Body of pancreas (tissue), 4 donors: ENCODE measurements at regions of chr3 and their contacts with region 1.

Region 1: GRCh38 chr3:124084022-124084881 is 92.3 kb upstream of the ROPN1 start:
- DNase-seq: no peak
- ATAC-seq: no peak
- H3K4me3 ChIP-seq: no peak overlapping the region
- H3K27ac ChIP-seq: no peak overlapping the region
- H3K4me1 ChIP-seq: no peaks in the 10 kb centered on the region
- H3K27me3 ChIP-seq: no peaks in the 10 kb centered on the region
- CTCF ChIP-seq: no peak
- POLR2A ChIP-seq: no peak

Region 2: DNA sequence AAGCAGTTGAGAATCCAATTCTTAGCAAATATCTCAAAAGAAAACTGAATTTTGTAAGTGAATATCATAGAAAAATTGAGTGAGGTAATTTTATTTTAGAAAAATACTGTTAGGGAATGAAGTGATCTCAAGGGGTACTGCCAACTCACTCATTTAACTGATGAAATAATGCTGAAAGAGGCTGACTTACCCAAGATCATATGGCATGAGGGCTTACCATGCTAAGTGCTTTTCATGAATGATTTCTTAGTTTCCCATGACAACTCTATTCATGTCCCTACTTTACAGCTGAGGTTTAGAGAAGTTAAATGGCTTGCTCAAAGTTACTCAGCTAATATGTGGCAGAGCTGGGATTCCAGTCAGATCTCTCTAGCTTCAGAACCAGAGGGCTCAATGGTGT is 153.8 kb before region 1 on chr3:
- intact Hi-C with region 1: no loop called
- DNase-seq: no peak
- ATAC-seq: no peak
- H3K4me3 ChIP-seq: no peak overlapping the region
- H3K27ac ChIP-seq: no peak overlapping the region
- H3K4me1 ChIP-seq: no peaks in the 10 kb centered on the region
- H3K27me3 ChIP-seq: no peaks in the 10 kb centered on the region
- CTCF ChIP-seq: no peak
- POLR2A ChIP-seq: no peak

Region 3: DNA sequence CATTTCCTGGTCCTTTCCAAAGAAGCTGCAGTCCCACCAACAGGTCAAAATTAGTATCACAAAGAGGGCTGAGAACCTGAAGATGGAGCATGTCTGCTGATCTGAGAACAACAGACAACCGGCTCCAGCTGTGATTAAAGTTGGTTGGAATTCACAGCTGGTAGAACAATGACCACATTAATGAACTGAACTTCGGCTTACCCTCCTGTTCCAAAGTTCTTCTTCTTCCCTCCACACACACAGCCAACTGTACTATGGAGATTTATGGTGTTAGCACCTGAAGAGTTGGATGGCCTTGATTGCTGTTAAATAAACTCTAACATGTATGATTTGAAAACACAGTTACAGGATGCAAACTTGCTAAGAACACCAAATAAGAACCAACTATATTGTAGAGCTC is 65.0 kb before region 1 on chr3:
- intact Hi-C with region 1: loop called (anchors 5 kb)
- DNase-seq: no peak
- ATAC-seq: no peak
- H3K4me3 ChIP-seq: no peak overlapping the region
- H3K27ac ChIP-seq: no peak overlapping the region
- H3K4me1 ChIP-seq: peaks cover 8% of the 10 kb centered on the region
- H3K27me3 ChIP-seq: peaks cover 0 to 7% of the 10 kb centered on the region in 2 donors
- CTCF ChIP-seq: no peak
- POLR2A ChIP-seq: no peak

Region 4: DNA sequence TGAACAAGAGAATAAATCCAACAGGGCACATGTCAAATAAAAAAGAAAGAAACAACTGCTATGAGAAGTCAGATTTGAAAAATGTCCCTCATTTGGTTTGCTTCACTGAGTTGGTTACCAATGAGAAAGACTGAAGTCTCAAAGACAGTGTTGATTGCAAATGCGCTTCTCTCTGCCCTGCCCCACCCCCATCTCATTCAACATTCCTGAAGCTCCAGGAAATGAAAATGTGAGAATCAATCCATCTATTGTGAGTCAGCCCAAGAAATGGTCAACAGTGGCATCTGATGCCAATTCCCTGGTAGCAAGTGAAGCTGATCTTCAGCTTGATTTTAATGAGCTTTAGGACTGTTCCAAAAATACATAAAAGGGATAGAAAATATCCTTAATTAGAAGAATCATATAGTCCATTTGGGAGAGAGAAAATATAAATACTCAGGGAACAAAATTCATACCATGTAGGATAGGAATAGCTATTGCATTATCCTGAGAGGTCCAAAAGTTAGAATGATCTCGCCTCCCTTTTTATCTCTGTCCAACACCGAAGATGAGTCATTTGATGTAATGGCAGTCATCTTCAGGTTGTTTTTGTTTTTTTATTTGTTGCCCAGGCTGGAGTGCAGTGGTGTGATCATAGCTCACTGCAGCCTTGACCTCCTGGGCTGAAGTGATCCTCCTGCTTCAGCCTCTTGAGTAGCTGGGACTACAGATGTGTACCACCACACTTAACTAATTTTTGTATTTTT is 445.7 kb after region 1 on chr3:
- intact Hi-C with region 1: no loop called
- DNase-seq: peak in 3 of 4 donors; percentile 17 to 25 (median 20)
- ATAC-seq: peak; percentile 71
- H3K4me3 ChIP-seq: no peak overlapping the region
- H3K27ac ChIP-seq: no peak overlapping the region
- H3K4me1 ChIP-seq: no peaks in the 10 kb centered on the region
- H3K27me3 ChIP-seq: no peaks in the 10 kb centered on the region
- CTCF ChIP-seq: no peak
- POLR2A ChIP-seq: no peak